CD14-positive monocyte (primary cell): ENCODE measurements at regions of chr3 and their contacts with region 1.

Region 1: GRCh38 chr3:129526121-129526900 is 2.1 kb upstream of the RHO start:
- DNase-seq: peak; percentile 94 to 97 (median 97)
- H3K4me3 ChIP-seq: no peak overlapping the region
- H3K4me3 Mint-ChIP-seq: peak overlapping the region in 1 of 2 donors; percentile 55
- H3K27ac ChIP-seq: peak overlapping the region; percentile 97 to 98
- H3K27ac Mint-ChIP-seq: peak overlapping the region; percentile 96 to 99 (median 99)
- H3K4me1 ChIP-seq: peaks cover 47 to 58% of the 10 kb centered on the region in 2 donors
- H3K4me1 Mint-ChIP-seq: peaks cover 48% of the 10 kb centered on the region
- H3K27me3 ChIP-seq: no peaks in the 10 kb centered on the region
- H3K27me3 Mint-ChIP-seq: peaks cover 0 to 6% (median 3%) of the 10 kb centered on the region in 3 donors
- CTCF ChIP-seq: no peak

Region 2: DNA sequence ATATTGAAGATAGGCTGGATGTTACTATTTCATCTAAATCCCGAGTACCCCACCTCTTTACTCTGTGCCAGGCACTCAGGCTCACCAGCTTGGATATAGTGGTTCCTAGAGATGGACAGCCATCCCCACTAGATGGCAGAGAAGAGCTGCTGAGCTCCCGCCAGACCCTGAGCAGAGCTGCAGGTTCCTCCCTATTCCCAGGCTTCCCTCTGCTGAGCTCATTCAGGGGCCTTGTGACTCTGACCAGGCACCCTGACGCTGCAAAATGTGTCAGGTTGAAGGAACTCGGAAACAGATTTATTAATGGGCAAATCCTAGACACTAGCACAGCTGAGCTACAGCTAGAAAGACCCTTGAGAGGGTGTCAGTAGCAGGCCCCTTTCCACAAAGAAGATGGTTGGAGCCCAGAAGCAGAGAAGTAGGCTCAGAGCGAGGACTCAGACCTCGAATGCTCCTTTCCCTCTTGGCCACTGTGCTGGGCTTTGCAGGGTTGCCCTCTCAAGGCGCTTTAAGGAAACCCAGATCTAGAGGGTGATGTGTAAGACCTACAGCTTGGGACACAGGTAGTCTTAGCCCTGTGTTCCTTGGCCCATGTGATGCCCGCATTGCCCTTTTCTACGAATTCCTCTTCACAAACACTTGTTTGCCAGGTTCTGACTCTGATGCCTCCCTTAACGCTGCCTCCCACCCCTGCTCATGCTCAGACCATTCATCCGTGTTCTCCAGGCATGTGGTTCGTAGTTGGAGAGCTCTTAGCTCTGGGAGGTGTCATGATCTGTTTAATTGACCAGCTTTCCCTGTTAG is 35.9 kb before region 1 on chr3:
- intact Hi-C with region 1: loop called in 1 of 2 experiments (anchors 5 kb)
- DNase-seq: peak; percentile 94 to 98 (median 96)
- H3K4me3 ChIP-seq: no peak overlapping the region
- H3K4me3 Mint-ChIP-seq: peak overlapping the region in 1 of 2 donors; percentile 26
- H3K27ac ChIP-seq: peak overlapping the region; percentile 89
- H3K27ac Mint-ChIP-seq: peak overlapping the region; percentile 87 to 98 (median 94)
- H3K4me1 ChIP-seq: peaks cover 50 to 55% of the 10 kb centered on the region in 2 donors
- H3K4me1 Mint-ChIP-seq: peaks cover 53% of the 10 kb centered on the region
- H3K27me3 ChIP-seq: no peaks in the 10 kb centered on the region
- H3K27me3 Mint-ChIP-seq: peaks cover 0 to 1% (median 0%) of the 10 kb centered on the region in 3 donors
- CTCF ChIP-seq: peak; percentile 91

Region 3: DNA sequence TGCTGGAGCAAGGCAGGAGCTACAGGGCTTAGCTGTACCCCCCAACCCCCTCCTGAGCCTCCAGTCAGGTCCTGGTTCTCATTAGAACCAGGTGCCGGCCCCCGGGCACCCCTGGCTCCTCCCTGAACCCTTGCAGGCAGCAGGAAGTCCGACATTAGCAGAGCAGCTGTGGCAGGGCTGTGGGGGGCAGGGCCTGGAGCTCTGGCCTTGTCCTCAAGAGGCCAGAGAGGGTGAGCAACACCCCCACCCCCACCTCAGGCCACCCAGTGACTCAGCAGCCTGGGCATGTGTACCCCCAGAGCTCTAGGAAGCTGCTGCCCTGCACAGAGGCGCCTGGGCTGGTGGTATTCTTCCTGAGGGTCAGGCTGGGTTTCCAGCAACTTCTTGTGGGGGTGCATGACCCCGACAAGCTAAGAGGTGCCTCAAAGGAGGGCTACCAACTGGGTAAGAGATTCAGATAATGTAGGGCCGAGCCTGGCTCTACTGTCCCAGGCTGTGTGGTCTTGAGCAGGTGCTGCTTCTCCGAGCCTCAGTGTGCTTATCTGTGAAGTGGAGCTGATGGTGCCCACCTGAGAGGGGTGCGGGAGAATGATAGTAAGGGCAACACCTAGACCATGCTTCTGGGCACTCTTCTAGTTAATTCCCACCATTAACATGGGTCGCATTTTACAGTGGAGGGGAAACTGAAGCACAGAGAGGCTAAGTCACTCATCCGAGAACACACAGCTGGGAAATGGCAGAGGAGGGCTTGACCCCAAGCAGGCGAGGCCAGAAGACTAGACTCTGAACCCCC is 32.7 kb after region 1 on chr3:
- intact Hi-C with region 1: no loop called
- DNase-seq: no peak
- H3K4me3 ChIP-seq: no peak overlapping the region
- H3K4me3 Mint-ChIP-seq: no peak overlapping the region
- H3K27ac ChIP-seq: peak overlapping the region in 1 of 2 donors; percentile 20
- H3K27ac Mint-ChIP-seq: peak overlapping the region in 2 of 7 donors; percentile 6 to 61
- H3K4me1 ChIP-seq: peaks cover 12 to 16% of the 10 kb centered on the region in 2 donors
- H3K4me1 Mint-ChIP-seq: peaks cover 20% of the 10 kb centered on the region
- H3K27me3 ChIP-seq: no peaks in the 10 kb centered on the region
- H3K27me3 Mint-ChIP-seq: no peaks in the 10 kb centered on the region
- CTCF ChIP-seq: no peak

Region 4: GRCh38 chr3:129596194-129597086 is 70.1 kb after region 1 on chr3:
- intact Hi-C with region 1: loop called in 1 of 2 experiments (anchors 5 kb)
- DNase-seq: peak; percentile 67 to 78 (median 69)
- H3K4me3 ChIP-seq: peak overlapping the region in 1 of 3 experiments; percentile 41
- H3K4me3 Mint-ChIP-seq: peak overlapping the region; percentile 50 to 71
- H3K27ac ChIP-seq: peak overlapping the region; percentile 60 to 90
- H3K27ac Mint-ChIP-seq: peak overlapping the region; percentile 60 to 85 (median 83)
- H3K4me1 ChIP-seq: peaks cover 97 to 100% of the 10 kb centered on the region in 2 donors
- H3K4me1 Mint-ChIP-seq: peaks cover 93% of the 10 kb centered on the region
- H3K27me3 ChIP-seq: no peaks in the 10 kb centered on the region
- H3K27me3 Mint-ChIP-seq: peaks cover 0 to 2% (median 0%) of the 10 kb centered on the region in 3 donors
- CTCF ChIP-seq: no peak

Region 5: GRCh38 chr3:129606636-129607390 is 80.5 kb after region 1 on chr3 and contains the start of gene PLXND1:
- intact Hi-C with region 1: loop called in 1 of 2 experiments (anchors 5 kb)
- DNase-seq: peak; percentile 43 to 64 (median 45)
- H3K4me3 ChIP-seq: peak within 1 kb of the TSS; percentile 57 to 86 (median 58)
- H3K4me3 Mint-ChIP-seq: peak within 1 kb of the TSS; percentile 97 to 99
- H3K27ac ChIP-seq: peak within 1 kb of the TSS; percentile 76 to 83
- H3K27ac Mint-ChIP-seq: peak within 1 kb of the TSS; percentile 85 to 96 (median 91)
- H3K4me1 ChIP-seq: peaks cover 61 to 70% of the 10 kb centered on the region in 2 donors
- H3K4me1 Mint-ChIP-seq: peaks cover 58% of the 10 kb centered on the region
- H3K27me3 ChIP-seq: peaks cover 0 to 9% of the 10 kb centered on the region in 2 donors
- H3K27me3 Mint-ChIP-seq: peaks cover 14 to 28% (median 14%) of the 10 kb centered on the region in 3 donors
- CTCF ChIP-seq: no peak
- polyA plus RNA-seq, gene PLXND1: 7.1 to 170 (median 9.9) TPM

Region 6: GRCh38 chr3:129616713-129617112 is 90.4 kb after region 1 on chr3:
- intact Hi-C with region 1: loop called in 1 of 2 experiments (anchors 5 kb)
- DNase-seq: peak; percentile 87 to 99 (median 91)
- H3K4me3 ChIP-seq: peak overlapping the region in 1 of 3 experiments; percentile 19
- H3K4me3 Mint-ChIP-seq: peak overlapping the region in 1 of 2 donors; percentile 64
- H3K27ac ChIP-seq: peak overlapping the region; percentile 80 to 89
- H3K27ac Mint-ChIP-seq: peak overlapping the region; percentile 92 to 98 (median 95)
- H3K4me1 ChIP-seq: peaks cover 77 to 86% of the 10 kb centered on the region in 2 donors
- H3K4me1 Mint-ChIP-seq: peaks cover 73% of the 10 kb centered on the region
- H3K27me3 ChIP-seq: no peaks in the 10 kb centered on the region
- H3K27me3 Mint-ChIP-seq: no peaks in the 10 kb centered on the region
- CTCF ChIP-seq: no peak